Colonic mucosa (tissue), 4 donors: ENCODE measurements at regions of chr7 and their contacts with region 1.

Region 1: DNA sequence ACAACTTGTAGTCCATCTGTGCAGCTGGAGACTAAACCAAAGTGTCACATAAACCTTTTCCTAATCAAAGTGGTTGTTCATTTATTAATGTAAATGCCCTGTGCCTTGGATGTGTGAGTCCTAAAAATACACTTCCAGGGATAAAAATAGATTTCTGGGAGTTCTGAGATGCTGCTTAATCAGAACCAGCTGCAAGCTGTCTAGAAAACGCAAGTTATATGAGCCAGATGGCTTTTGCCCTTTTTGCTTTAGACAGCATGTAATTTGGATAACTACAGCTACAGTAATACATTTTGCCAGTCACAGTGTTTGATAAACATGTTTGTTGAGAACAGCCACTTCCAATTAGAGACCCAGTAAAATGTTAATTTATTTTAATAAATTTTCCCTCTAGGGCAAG is 185.1 kb upstream of the PRPS1L1 start:
- DNase-seq: no peak
- H3K4me3 ChIP-seq: no peak overlapping the region
- H3K27ac ChIP-seq: no peak overlapping the region
- H3K4me1 ChIP-seq: no peaks in the 10 kb centered on the region
- H3K27me3 ChIP-seq: no peaks in the 10 kb centered on the region
- CTCF ChIP-seq: no peak

Region 2: DNA sequence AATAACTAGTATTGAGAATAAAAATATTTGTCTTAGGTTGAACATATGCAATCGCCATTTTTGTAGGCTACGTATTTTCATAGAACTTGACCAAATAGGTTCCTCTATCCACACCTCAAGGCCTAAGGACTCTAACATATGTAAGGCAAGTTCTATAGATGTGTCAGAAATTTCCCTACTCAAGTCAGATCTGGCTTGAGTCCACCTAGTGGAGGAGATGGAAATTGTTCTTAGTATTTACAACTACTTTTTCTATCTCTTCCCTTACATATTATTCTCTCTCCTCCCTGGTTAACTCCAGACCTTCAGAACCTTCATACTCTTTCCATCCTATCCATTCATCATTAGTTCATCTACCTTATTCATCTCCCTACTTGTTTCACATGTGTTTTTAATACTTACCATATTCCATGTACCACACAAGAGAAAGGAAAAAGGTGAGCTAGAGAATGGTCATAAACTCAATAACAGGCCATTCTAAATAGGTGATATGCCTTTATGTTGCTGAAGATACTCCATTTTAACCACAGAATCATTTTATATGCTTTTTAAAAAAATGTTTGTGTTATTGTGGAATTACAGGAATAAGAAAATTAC is 108.3 kb after region 1 on chr7:
- intact Hi-C with region 1: loop called (anchors 5 kb)
- DNase-seq: no peak
- H3K4me3 ChIP-seq: no peak overlapping the region
- H3K27ac ChIP-seq: no peak overlapping the region
- H3K4me1 ChIP-seq: no peaks in the 10 kb centered on the region
- H3K27me3 ChIP-seq: no peaks in the 10 kb centered on the region
- CTCF ChIP-seq: peak; percentile 45